Esophagus muscularis mucosa (tissue), 4 donors: ENCODE measurements at regions of chr9 and their contacts with region 1.

Region 1: GRCh38 chr9:97411789-97412625 is at the start of gene TDRD7:
- DNase-seq: no peak
- H3K4me3 ChIP-seq: peak within 1 kb of the TSS; percentile 80 to 96 (median 92)
- H3K27ac ChIP-seq: peak within 1 kb of the TSS; percentile 85 to 90 (median 88)
- H3K4me1 ChIP-seq: peaks cover 10 to 23% (median 16%) of the 10 kb centered on the region in 4 donors
- H3K27me3 ChIP-seq: no peaks in the 10 kb centered on the region
- CTCF ChIP-seq: peak; percentile 99
- EP300 ChIP-seq: no peak
- POLR2A ChIP-seq: no peak
- total RNA-seq, gene TDRD7: 15.4 to 22.9 (median 16.4) TPM

Region 2: DNA sequence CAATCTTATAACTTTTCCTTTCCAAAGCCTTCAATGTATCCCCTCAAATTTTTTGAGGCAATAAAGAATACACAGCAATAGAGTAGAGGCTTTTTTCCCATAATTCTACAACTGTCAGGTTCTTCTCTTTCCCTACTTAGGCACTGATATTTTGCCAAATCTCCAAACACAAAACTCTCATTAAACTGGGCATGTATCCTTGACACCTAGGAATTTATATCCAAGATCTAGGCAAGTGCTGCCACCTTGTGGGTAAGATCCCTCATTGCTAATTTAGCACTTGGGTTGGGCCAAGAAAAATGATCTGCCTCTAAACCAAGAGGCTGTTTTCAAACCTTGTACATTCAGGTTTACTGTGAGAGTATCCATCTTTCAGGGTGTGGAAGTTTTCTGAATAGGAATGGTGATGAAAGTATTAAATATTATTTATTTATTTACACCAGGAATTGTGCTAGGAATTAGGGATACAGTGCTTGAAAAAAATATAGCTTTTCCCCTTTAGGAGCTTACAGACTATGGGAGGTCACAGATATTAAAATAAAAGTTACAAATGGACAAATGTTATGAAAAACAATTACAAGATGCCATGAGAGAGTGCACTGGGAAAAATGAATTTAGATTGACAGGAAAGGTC is 203.5 kb after region 1 on chr9:
- intact Hi-C with region 1: loop called (anchors 1 kb)
- DNase-seq: no peak
- H3K4me3 ChIP-seq: no peak overlapping the region
- H3K27ac ChIP-seq: peak overlapping the region in 3 of 4 donors; percentile 8 to 51 (median 12)
- H3K4me1 ChIP-seq: peaks cover 0 to 12% (median 10%) of the 10 kb centered on the region in 4 donors
- H3K27me3 ChIP-seq: no peaks in the 10 kb centered on the region
- CTCF ChIP-seq: peak; percentile 82 to 92 (median 89)
- EP300 ChIP-seq: no peak
- POLR2A ChIP-seq: no peak